Activated CD8-positive, alpha-beta T cell treated with anti-CD3 and anti-CD28 coated beads for 36 hours (primary cell): ENCODE measurements at regions of chr1 and their contacts with region 1.

Region 1: DNA sequence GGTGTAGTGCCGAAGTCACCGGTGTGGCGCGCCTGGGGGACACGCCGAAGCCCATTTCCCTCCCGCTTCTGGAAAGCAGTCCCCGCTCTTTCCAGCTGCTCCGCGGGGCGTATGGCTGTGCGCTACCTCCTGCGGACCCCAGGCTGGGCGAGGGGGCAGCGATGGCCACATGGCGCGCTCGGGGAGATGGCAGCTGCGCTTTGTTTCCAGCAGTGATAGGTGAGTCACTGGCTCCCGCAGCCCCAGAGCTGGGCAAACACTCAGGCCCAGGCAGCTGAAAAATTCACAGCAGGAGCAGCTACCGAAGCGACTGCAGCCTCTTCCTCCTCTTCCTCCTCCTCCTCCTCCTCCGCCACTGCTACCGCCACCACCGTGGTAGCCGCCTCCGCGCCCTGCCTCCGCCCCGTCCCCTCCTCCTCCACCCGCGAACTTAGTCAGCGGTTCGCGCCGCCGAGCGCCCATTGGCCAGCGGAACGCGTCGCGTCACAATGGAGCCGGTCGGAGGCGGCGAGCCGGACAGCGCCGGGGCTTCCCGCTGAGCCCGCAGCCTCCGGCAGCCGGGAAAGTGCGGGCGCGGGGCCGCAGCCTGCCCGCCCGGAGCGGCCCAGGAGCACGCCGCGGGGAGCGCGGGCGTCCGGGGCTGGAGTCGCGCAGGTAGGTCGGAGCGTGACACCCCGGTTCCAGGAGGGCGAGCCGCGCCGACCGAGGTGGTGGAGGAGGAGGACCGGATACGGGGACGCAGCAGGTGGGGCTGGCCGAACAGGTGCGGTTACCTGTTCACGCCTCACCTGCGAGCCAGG is at the start of gene LRRC8B:
- DNase-seq: peak; percentile 91
- ATAC-seq: peak; percentile 75
- H3K4me3 Mint-ChIP-seq: no peak within 1 kb of the TSS
- H3K27ac Mint-ChIP-seq: no peak within 1 kb of the TSS
- H3K4me1 Mint-ChIP-seq: peaks cover 31% of the 10 kb centered on the region
- H3K27me3 Mint-ChIP-seq: no peaks in the 10 kb centered on the region
- CTCF ChIP-seq: no peak
- total RNA-seq, gene LRRC8B: 24.9 to 31.7 TPM

Region 2: DNA sequence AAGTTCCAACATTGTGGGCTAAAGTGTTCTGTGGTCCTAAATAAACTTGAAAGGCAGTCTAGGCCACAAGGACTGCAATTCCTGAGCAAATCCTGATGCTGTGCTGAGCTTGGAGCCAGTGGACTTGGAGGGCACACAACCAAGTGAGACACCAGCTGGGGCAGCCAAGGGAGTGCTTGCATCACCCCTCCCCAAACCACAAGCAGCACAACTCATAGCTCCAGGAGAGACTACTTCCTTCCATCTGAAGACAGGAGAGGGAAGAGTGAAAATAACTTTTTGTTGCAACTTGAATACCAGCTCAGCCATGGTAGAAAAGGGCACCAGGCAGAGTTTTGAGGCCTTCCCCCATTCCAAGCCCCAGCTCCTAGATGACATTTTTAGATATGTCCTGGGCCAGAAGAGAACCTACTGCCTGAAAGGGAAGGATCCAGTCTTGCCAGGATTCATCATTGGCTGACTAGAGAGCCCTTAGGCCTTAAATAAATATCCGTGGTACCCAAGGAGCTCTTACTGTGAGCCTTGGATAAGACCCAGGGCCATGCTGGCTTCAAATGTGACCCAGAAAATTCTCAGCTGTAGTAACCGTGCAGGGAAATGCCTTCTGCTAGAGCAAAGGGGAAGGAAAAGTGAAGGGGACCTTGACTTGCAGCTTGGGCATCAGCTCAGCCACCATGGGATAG is 35.4 kb before region 1 on chr1:
- CTCF ChIA-PET with region 1: interaction called, 5 read pairs
- POLR2A ChIA-PET with region 1: no interaction called
- intact Hi-C with region 1: loop called (anchors 5 kb)
- DNase-seq: no peak
- ATAC-seq: no peak
- H3K4me3 Mint-ChIP-seq: no peak overlapping the region
- H3K27ac Mint-ChIP-seq: no peak overlapping the region
- H3K4me1 Mint-ChIP-seq: peaks cover 22% of the 10 kb centered on the region
- H3K27me3 Mint-ChIP-seq: peaks cover 3% of the 10 kb centered on the region
- CTCF ChIP-seq: no peak

Region 3: GRCh38 chr1:89545264-89546038 is 20.9 kb after region 1 on chr1:
- CTCF ChIA-PET with region 1: interaction called, 6 read pairs
- POLR2A ChIA-PET with region 1: interaction called, 9 read pairs
- intact Hi-C with region 1: loop called (anchors 2 kb)
- DNase-seq: peak; percentile 80
- ATAC-seq: peak; percentile 74
- H3K4me3 Mint-ChIP-seq: peak overlapping the region; percentile 23
- H3K27ac Mint-ChIP-seq: peak overlapping the region; percentile 84
- H3K4me1 Mint-ChIP-seq: peaks cover 84% of the 10 kb centered on the region
- H3K27me3 Mint-ChIP-seq: no peaks in the 10 kb centered on the region
- CTCF ChIP-seq: no peak